Left colon (tissue), 2 donors: ENCODE measurements at regions of chr5 and their contacts with region 1.

Region 1: DNA sequence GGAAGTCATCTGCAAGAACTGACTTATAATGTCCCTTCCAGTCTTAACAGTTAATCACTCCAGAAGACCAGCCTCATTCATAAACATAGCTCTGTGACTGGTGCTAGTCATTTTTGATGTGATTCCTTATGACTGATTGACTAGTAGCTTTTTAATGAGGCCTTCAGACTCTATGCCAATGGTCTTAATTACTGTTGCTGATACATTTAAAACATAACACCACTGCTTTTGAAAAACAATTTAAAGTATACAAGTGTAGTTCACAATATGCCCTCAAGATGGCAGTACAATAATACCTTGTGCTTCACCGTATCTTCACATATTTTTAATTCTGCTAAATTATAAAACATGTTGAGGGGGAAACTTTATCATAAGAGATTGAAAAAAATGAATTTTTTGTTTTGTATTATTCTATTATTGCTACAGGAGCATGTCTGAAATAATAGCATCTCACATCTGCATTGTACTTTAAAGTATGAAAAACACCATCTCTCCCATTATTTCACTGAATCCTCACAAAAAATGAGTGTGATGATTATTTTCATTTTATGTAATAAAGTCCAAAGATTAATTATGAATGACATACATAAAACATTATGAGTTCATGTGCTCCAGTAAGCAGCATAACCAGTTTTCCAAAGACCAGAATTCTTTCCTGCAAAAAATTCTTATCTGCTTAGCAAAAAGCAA is 55.2 kb upstream of the SHISAL2B start:
- DNase-seq: no peak
- ATAC-seq: no peak

Region 2: DNA sequence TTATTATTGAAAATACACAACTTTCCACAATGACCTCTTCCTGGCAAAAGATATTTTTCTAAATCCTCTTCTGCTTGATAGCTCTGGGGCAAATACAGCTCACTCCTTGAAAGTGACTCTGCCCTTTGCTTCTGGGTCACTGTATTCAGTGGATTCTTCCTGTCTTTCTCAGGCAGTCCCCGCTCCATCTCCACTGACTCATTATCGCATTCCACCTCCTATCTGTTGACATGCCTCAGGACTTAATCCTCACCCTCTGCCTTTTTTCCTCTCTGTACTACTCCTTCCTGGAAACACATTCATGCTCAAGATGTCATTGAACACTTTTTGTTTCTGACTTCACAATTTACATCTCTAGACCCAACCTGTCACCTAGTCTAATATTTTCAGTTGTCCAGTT is 137.8 kb before region 1 on chr5:
- intact Hi-C with region 1: no loop called
- DNase-seq: no peak
- ATAC-seq: no peak

Region 3: GRCh38 chr5:64784451-64785025 is 149.4 kb after region 1 on chr5:
- intact Hi-C with region 1: loop called in 1 of 2 experiments (anchors 5 kb)
- DNase-seq: peak; percentile 55 to 83
- ATAC-seq: peak; percentile 76

Region 4: DNA sequence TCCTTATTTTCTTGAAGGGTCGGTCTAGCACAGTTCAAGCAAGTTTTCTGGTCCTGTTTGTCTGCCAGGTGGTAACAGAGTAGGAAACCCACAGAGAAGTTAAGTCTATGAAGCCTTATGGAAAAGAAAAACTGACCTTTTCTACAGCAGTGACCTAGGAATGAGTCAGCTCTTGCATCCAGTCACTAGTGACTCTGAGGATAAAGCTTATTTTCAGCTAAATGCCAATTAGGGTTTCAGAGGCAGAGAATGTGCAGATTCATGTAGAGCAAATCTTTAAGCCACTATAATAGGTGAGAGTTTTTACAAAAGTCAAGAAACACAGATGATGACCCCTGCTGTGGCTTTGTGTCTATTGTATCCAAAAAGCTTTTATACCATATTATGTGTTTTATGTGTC is 234.3 kb after region 1 on chr5:
- intact Hi-C with region 1: no loop called
- DNase-seq: no peak
- ATAC-seq: no peak

Region 5: DNA sequence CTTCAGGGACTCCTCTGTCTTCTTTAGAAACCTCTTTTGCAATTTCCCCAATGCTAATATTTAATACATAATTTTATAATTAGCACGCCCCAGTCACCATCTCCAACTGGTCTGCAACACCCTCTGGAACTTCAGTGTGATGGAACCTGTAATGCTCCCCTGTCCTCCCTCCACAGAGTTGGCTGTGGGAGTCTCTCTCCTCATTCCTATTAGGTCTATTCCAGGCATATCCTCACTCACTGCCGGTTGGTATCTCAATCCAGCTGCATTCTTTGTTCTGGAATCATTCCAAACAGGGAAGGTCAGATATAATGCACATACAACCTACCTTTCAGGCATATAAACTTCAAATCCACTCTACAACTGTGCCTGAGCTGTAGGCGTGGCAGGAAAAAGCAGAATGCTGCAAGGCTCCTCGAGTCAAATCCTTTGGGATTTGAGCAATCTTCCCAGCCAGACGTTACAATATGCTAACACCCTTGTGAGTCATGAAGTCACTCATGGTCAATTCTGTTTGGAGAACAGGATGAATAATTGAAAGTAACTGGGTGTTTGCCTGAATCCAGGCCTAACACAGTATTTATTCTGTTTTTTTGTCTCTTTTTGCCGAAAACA is 427.4 kb after region 1 on chr5:
- intact Hi-C with region 1: no loop called
- DNase-seq: no peak
- ATAC-seq: no peak